K562 (cell line): ENCODE measurements at regions of chr12 and their contacts with region 1.

Region 1: GRCh38 chr12:23722655-23723054 is 226.8 kb downstream of the SOX5 start:
- DNase-seq: peak; percentile 40 to 91 (median 56)
- ATAC-seq: peak; percentile 75
- H3K4me3 ChIP-seq: peak overlapping the region; percentile 11
- H3K27ac ChIP-seq: peak overlapping the region; percentile 81
- H3K4me1 ChIP-seq: peaks cover 0 to 7% of the 10 kb centered on the region in 2 experiments; a peak in 2 of 5 replicates
- H3K27me3 ChIP-seq: no peaks in the 10 kb centered on the region
- CTCF ChIP-seq: no peak
- EP300 ChIP-seq: peak; percentile 96
- POLR2A ChIP-seq: peak; percentile 43; the same call in 1 of the 2 replicates
- RAD21 ChIP-seq: no peak; a peak in 1 of 4 replicates

Region 2: DNA sequence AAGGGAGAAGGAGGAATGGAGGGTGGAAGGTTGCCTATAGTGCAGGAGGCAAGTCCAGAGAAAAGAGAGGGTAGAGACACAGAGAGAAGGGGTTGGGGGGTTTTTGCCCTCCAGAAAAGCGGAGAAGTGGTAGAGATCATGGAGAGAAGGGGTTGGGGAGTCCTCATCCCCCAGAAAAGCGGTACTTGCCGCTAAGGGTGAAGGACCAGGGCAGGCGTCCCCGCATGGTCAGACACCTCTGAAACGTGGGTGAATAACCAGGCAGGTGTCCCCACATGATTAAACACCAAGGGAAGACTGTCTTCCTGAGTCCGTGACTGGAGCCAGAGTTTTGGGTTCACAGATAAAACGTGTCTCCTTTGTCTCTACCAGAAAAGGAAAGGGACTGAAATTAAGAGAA is 212.2 kb before region 1 on chr12:
- CTCF ChIA-PET with region 1: no interaction called
- POLR2A ChIA-PET with region 1: no interaction called
- in situ Hi-C with region 1: no loop called
- intact Hi-C with region 1: loop called (anchors 2 kb)
- DNase-seq: peak in 1 of 4 experiments; percentile 45
- ATAC-seq: peak; percentile 56
- H3K4me3 ChIP-seq: peak overlapping the region; percentile 43
- H3K27ac ChIP-seq: peak overlapping the region; percentile 79
- H3K4me1 ChIP-seq: 0 out of 5 replicates have a peak, but pooled peaks cover 0 to 6% of the 10 kb centered on the region in 2 experiments
- H3K27me3 ChIP-seq: no peaks in the 10 kb centered on the region
- CTCF ChIP-seq: no peak
- EP300 ChIP-seq: no peak
- POLR2A ChIP-seq: no peak
- RAD21 ChIP-seq: no peak

Region 3: GRCh38 chr12:23555825-23556207 is 166.8 kb before region 1 on chr12:
- CTCF ChIA-PET with region 1: no interaction called
- POLR2A ChIA-PET with region 1: no interaction called
- in situ Hi-C with region 1: no loop called
- intact Hi-C with region 1: loop called (anchors 2 kb)
- DNase-seq: peak; percentile 29 to 80 (median 50)
- ATAC-seq: peak; percentile 72
- H3K4me3 ChIP-seq: peak overlapping the region; percentile 31
- H3K27ac ChIP-seq: peak overlapping the region; percentile 85
- H3K4me1 ChIP-seq: peaks cover 3 to 48% of the 10 kb centered on the region in 2 experiments; a peak in 3 of 5 replicates
- H3K27me3 ChIP-seq: no peaks in the 10 kb centered on the region
- CTCF ChIP-seq: no peak
- EP300 ChIP-seq: peak; percentile 83
- POLR2A ChIP-seq: no peak; the same call in 1 of the 2 replicates
- RAD21 ChIP-seq: no peak

Region 4: DNA sequence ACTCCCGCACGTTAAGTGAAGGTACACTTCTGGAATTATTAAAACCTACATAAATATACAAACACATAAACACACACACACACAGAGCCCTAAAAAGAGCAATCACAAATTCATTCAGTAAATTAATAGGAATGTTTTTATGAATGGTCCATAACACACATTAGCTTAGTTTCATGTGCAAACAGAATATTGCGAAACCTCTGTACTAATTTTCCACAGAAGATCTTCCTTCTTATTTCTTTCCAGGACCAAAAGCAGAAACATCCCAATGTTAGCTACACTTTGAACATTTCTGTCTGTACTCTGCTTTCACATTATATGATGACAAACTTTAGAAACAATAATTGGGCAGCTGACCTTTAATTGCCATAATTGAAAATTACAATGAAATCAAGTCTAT is 125.2 kb after region 1 on chr12:
- CTCF ChIA-PET with region 1: no interaction called
- POLR2A ChIA-PET with region 1: no interaction called
- in situ Hi-C with region 1: no loop called
- intact Hi-C with region 1: no loop called
- DNase-seq: no peak
- ATAC-seq: no peak
- H3K4me3 ChIP-seq: no peak overlapping the region
- H3K27ac ChIP-seq: no peak overlapping the region
- H3K4me1 ChIP-seq: no peaks in the 10 kb centered on the region; a peak in 1 of 5 replicates
- H3K27me3 ChIP-seq: no peaks in the 10 kb centered on the region
- CTCF ChIP-seq: no peak
- EP300 ChIP-seq: no peak
- POLR2A ChIP-seq: no peak
- RAD21 ChIP-seq: no peak

Region 5: GRCh38 chr12:23887055-23887835 is 164.6 kb after region 1 on chr12:
- CTCF ChIA-PET with region 1: no interaction called
- POLR2A ChIA-PET with region 1: no interaction called
- in situ Hi-C with region 1: no loop called
- intact Hi-C with region 1: loop called (anchors 5 kb)
- DNase-seq: peak; percentile 15 to 78 (median 37)
- ATAC-seq: peak; percentile 87
- H3K4me3 ChIP-seq: no peak overlapping the region
- H3K27ac ChIP-seq: peak overlapping the region; percentile 55
- H3K4me1 ChIP-seq: peaks cover 0 to 28% of the 10 kb centered on the region in 2 experiments; a peak in 3 of 5 replicates
- H3K27me3 ChIP-seq: no peaks in the 10 kb centered on the region
- CTCF ChIP-seq: no peak
- EP300 ChIP-seq: peak; percentile 91
- POLR2A ChIP-seq: no peak
- RAD21 ChIP-seq: 0 out of 4 replicates have a peak, but pooled peaks of 1 of the 2 experiments have one; percentile 9